HepG2 (cell line): ENCODE measurements at regions of chr3 and their contacts with region 1.

Region 1: DNA sequence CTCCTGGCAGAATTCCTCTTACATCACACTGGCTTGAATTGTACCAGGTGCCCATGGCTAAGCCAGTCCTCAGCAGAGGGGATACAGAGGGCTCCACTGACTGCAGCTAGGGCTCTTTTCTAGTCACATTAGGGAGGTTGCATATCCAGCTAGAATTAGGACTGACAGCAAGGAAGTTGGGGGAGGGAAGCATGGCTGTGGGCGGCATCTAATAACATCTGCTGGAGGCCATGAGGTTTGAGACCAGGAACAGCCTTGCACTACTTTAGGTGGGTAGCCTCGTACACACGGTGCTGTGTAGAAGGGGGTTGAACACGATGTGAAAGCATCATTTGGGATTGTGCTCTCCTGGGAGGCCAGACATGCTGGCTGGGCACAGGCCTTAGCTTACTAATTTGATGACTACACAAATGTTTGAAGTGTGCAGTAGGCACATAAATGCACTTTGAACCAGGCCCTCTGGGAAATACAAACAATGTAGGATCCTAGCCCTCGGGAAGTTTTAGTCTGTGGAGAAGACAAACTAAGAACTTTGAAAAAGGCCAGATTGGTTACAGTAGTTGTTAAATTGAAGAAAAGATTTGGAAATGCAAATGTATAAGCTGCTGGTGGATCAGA is 30.2 kb downstream of the CHCHD6 start:
- DNase-seq: peak; percentile 88
- ATAC-seq: peak; percentile 99
- H3K4me3 ChIP-seq: peak overlapping the region in 1 of 3 experiments; percentile 8; a peak in 1 of 6 replicates
- H3K27ac ChIP-seq: peak overlapping the region; percentile 64
- H3K4me1 ChIP-seq: peaks cover 32% of the 10 kb centered on the region
- H3K27me3 ChIP-seq: no peaks in the 10 kb centered on the region
- CTCF ChIP-seq: no peak
- EP300 ChIP-seq: no peak
- POLR2A ChIP-seq: no peak
- RAD21 ChIP-seq: peak; percentile 29; the same call in 1 of the 2 replicates

Region 2: DNA sequence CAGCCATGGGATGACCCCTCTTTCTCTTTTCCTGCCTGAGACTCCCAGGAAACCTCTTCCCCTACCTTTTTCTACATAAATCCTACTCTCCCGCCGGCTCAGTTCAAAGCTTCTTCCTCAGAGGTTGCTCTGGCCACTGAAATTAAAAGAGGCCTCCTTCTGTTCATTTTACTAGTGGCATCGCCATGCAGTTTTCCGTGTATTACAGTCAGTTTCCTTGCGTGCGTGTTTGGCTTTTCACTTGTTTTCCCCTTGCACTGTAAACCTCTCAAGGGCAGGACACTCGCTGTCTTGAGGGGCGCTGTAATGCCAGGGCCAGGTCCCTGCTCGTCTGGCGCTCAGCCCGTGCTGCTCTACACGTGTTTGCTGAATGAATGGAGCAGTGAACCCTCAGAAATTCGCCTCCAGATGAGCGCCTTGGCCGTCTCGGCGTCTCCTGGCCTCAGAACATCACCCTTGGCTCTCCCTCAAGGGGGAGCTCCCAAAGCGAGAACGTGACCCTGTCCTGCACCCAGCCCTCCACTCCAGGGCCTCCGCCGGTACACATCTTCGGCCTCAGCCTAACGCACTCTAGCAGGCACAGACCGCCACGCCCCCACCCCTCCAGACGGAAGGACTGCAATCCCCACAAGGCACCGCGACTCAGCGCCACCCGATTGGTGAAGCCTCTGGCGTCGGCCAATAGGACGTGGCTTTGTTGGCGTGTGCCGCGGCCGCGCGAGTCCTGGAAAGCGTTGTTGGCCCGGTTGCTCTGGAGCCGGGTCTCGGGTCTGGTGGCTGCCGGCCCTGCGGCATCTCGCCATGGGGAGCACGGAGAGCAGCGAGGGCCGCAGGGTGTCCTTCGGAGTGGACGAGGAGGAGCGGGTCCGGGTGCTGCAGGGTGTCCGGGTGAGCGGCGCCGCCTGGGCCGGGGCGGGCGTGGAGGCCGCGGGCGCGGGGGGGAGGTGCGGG is 30.4 kb before region 1 on chr3 and contains the start of gene CHCHD6:
- CTCF ChIA-PET with region 1: no interaction called
- POLR2A ChIA-PET with region 1: no interaction called
- in situ Hi-C with region 1: no loop called
- intact Hi-C with region 1: loop called (anchors 1 kb)
- DNase-seq: peak; percentile 93
- ATAC-seq: peak; percentile 99
- H3K4me3 ChIP-seq: peak within 1 kb of the TSS; percentile 85 to 89 (median 86)
- H3K27ac ChIP-seq: no peak within 1 kb of the TSS
- H3K4me1 ChIP-seq: peaks cover 23% of the 10 kb centered on the region
- H3K27me3 ChIP-seq: peaks cover 0 to 3% of the 10 kb centered on the region in 2 experiments; a peak in 2 of 5 replicates
- CTCF ChIP-seq: peak; percentile 60
- EP300 ChIP-seq: no peak
- POLR2A ChIP-seq: peak in 1 of 2 experiments; percentile 12; a peak in 2 of 4 replicates
- RAD21 ChIP-seq: no peak
- total RNA-seq, gene CHCHD6: 20.3 and 24.8 TPM in 2 replicates

Region 3: GRCh38 chr3:126752303-126752842 is 18.2 kb after region 1 on chr3:
- CTCF ChIA-PET with region 1: no interaction called
- POLR2A ChIA-PET with region 1: no interaction called
- in situ Hi-C with region 1: no loop called
- intact Hi-C with region 1: no loop called
- DNase-seq: peak; percentile 63
- ATAC-seq: peak; percentile 98
- H3K4me3 ChIP-seq: no peak overlapping the region
- H3K27ac ChIP-seq: no peak overlapping the region
- H3K4me1 ChIP-seq: peaks cover 19% of the 10 kb centered on the region
- H3K27me3 ChIP-seq: no peaks in the 10 kb centered on the region; a peak in 1 of 5 replicates
- CTCF ChIP-seq: peak; percentile 97
- EP300 ChIP-seq: no peak
- POLR2A ChIP-seq: no peak
- RAD21 ChIP-seq: peak; percentile 92